ENCODE measurements at regions of chr19 and their contacts with region 1.

Region 1: DNA sequence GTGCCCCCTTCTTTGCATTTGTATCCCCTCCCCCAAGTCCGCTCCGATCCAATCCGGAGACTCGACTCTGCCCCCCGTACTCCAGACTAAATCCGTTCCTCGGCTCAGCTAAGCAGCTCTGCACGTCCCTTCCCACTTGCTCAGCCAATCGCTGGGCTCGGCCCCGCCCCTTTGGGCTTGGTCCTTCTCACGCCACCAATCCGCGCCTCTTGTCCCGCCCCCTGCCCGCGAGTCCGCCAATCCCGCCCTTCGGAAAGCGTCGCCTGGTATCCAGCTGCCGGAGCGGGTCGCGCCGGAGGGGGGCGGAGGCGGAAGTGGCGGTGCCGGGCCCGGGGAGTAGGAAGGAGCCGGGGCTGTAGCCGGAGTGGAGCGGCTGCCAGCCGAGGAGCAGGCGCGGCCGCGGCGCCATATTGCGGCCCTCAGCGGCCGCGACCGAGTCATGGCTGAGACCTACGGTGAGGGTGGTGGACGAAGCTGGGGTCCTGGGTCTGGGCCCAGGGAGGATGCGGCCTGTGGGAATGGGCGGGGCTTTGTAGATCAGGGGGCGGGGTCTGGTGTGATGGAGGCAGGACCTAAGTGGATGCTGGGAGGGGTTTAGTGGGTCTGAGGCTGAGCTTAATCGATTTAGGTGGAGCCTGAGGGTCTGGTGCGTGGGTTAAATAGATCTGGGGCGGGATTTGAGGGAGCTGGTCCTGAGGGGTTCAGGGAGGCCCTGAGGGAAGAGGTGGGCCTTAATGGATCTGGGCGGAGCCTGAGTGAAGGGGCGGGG is at the start of gene RAB4B:
- DNase-seq: peak; percentile 96 to 100 (median 97)
- ATAC-seq: peak; percentile 92
- H3K4me3 ChIP-seq: peak within 1 kb of the TSS; percentile 84
- H3K27ac ChIP-seq: peak within 1 kb of the TSS; percentile 90
- H3K4me1 ChIP-seq: peaks cover 12 to 18% of the 10 kb centered on the region in 2 experiments; a peak in 3 of 5 replicates
- H3K27me3 ChIP-seq: no peaks in the 10 kb centered on the region
- CTCF ChIP-seq: no peak
- EP300 ChIP-seq: no peak
- POLR2A ChIP-seq: peak; percentile 74
- RAD21 ChIP-seq: no peak
- polyA plus RNA-seq, gene RAB4B: 0.28 to 0.92 TPM

Region 2: DNA sequence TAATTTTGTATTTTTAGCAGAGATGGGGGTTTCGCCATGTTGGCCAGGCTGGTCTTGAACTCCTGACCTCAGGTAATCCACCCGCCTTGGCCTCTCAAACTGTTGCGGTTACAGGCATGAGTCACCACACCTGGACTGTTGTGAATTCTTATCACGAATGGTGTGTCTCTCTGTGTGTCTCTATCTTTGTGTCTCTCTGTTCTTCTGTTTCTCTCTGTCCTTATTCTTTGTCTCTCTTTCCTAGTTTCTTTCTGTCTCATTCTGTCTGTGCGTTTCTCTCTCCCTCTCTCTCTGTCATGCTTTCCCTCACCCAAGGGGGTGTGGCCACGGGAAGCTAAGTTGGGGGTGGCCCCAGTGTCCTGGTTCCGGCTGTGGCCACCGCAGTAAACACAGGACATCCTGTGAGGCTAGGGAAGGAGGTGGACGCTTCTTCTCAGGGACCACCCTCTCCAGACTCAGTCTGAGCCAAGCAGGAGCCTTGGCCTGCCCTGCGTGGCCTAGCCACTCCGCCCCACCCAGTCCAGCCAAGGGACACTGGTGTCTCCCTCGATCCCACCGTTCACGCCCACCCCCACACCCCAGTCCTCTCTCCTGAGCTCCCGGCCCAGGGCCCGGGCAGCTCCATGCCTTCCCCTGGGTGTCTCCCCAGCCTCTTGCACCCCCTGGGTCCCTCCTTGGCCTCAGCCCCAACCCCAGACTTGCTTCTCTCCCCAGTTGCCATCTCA is 361.0 kb before region 1 on chr19:
- CTCF ChIA-PET with region 1: no interaction called
- POLR2A ChIA-PET with region 1: no interaction called
- in situ Hi-C with region 1: no loop called
- intact Hi-C with region 1: no loop called
- DNase-seq: peak; percentile 61 to 87 (median 68)
- ATAC-seq: peak; percentile 74
- H3K4me3 ChIP-seq: peak overlapping the region; percentile 13
- H3K27ac ChIP-seq: peak overlapping the region; percentile 88
- H3K4me1 ChIP-seq: peaks cover 30 to 57% of the 10 kb centered on the region in 2 experiments
- H3K27me3 ChIP-seq: no peaks in the 10 kb centered on the region
- CTCF ChIP-seq: no peak
- EP300 ChIP-seq: peak; percentile 61
- POLR2A ChIP-seq: peak; percentile 78
- RAD21 ChIP-seq: no peak

Region 3: GRCh38 chr19:40791349-40791748 is 13.2 kb after region 1 on chr19:
- CTCF ChIA-PET with region 1: no interaction called
- POLR2A ChIA-PET with region 1: interaction called, 11 read pairs
- in situ Hi-C with region 1: no loop called
- intact Hi-C with region 1: no loop called
- DNase-seq: no peak
- ATAC-seq: no peak
- H3K4me3 ChIP-seq: no peak overlapping the region
- H3K27ac ChIP-seq: no peak overlapping the region
- H3K4me1 ChIP-seq: peaks cover 0 to 9% of the 10 kb centered on the region in 2 experiments; a peak in 2 of 5 replicates
- H3K27me3 ChIP-seq: no peaks in the 10 kb centered on the region
- CTCF ChIP-seq: no peak
- EP300 ChIP-seq: no peak
- POLR2A ChIP-seq: no peak
- RAD21 ChIP-seq: no peak

Region 4: GRCh38 chr19:40798223-40798996 is 20.3 kb after region 1 on chr19:
- CTCF ChIA-PET with region 1: no interaction called
- POLR2A ChIA-PET with region 1: interaction called, 14 read pairs
- in situ Hi-C with region 1: no loop called
- intact Hi-C with region 1: loop called (anchors 1 kb)
- DNase-seq: peak; percentile 74 to 100 (median 86)
- ATAC-seq: peak; percentile 88
- H3K4me3 ChIP-seq: peak overlapping the region; percentile 38
- H3K27ac ChIP-seq: peak overlapping the region; percentile 78
- H3K4me1 ChIP-seq: peaks cover 43 to 52% of the 10 kb centered on the region in 2 experiments
- H3K27me3 ChIP-seq: no peaks in the 10 kb centered on the region
- CTCF ChIP-seq: peak; percentile 33 to 57 (median 55); a peak in 5 of 6 replicates
- EP300 ChIP-seq: peak; percentile 9; the same call in 1 of the 2 replicates
- POLR2A ChIP-seq: peak; percentile 76
- RAD21 ChIP-seq: peak; percentile 3 to 17; a peak in 1 of 4 replicates

Region 5: DNA sequence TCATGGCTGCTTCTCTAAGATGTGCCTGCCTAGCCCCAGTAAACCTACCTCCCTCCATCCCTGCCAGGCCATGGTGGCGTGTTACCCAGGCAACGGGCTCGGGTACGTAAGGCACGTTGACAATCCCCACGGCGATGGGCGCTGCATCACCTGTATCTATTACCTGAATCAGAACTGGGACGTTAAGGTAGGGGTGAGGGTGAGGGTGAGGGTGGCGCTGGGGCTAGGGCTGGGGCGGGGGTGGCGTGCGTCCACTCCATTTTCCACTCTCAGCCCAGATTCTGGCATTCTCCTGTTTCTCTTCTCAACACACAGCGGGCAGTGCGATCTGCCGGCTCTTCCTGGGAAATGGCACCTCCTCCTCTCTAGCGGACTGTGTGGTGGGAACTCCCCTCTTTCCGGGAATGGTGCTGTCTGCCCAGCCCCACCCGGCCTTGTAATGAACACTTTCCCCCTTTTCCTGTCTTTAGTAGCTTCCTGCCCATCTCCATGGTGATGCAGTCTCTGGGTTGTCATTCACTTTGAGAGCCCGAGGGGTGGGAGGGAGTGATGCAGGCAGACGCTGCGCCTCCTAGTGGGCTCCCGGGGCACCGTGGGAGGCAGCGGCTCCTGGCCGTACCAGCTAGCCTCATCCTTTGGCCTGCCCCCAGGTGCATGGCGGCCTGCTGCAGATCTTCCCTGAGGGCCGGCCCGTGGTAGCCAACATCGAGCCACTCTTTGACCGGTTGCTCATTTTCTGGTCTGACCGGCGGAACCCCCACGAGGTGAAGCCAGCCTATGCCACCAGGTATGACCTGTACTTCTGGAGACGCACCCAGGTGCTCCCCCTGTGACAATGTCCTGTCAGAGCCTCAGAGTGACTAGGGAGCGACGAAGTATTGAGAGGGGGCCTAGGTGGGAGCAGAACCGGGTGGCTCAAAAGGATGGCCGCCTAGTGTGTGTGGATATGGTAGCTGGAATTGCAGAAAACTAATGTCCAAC is 28.7 kb after region 1 on chr19:
- CTCF ChIA-PET with region 1: no interaction called
- POLR2A ChIA-PET with region 1: interaction called, 26 read pairs
- in situ Hi-C with region 1: no loop called
- intact Hi-C with region 1: no loop called
- DNase-seq: peak; percentile 75 to 87 (median 80)
- ATAC-seq: peak; percentile 68
- H3K4me3 ChIP-seq: no peak overlapping the region
- H3K27ac ChIP-seq: no peak overlapping the region
- H3K4me1 ChIP-seq: peaks cover 39 to 82% of the 10 kb centered on the region in 2 experiments
- H3K27me3 ChIP-seq: no peaks in the 10 kb centered on the region
- CTCF ChIP-seq: peak; percentile 82 to 91 (median 85)
- EP300 ChIP-seq: no peak
- POLR2A ChIP-seq: no peak; the same call in 1 of the 2 replicates
- RAD21 ChIP-seq: peak; percentile 41 to 59